OCI-LY7 (cell line): ENCODE measurements at regions of chr5 and their contacts with region 1.

Region 1: DNA sequence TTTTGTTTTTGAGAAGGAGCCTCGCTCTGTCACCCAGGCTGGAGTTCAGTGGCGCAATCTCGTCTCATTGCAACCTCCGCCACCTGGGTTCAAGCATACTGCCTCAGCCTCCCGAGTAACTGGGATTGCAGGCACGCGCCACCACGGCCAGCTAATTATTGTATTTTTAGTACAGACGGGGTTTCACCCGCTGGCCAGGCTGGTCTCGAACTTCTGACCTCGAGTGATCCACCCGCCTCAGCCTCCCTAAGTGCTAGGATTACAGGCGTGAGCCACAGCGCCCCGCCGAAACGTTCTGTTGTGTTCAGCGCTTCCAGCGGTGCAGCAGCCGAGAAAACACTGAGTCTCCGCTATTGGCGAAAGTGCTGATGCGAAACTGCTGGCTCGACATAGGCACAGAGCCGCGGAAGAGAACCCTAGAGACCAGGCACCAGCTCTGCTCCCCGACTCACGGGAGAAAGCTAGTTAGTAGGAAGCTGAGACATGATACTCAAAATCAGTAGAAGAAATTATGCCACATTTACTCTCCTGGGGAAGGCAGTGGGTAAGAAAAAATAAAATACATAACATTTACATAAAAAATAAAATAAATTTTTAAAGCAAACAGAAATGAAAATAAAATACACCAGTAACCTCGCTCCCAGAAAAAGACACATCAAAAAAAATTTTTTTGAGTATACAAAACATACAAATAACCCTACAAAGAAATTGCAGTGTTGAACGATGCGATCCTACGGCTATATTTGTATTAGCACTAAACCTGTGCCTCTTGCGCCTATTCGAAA is 31.6 kb downstream of the ANXA2R start:
- DNase-seq: peak; percentile 96
- H3K4me3 ChIP-seq: peak overlapping the region; percentile 70
- H3K27ac ChIP-seq: peak overlapping the region; percentile 86
- H3K4me1 ChIP-seq: peaks cover 32% of the 10 kb centered on the region
- CTCF ChIP-seq: peak; percentile 66

Region 2: GRCh38 chr5:43049236-43049635 is 40.7 kb after region 1 on chr5:
- CTCF ChIA-PET with region 1: no interaction called
- POLR2A ChIA-PET with region 1: no interaction called
- intact Hi-C with region 1: no loop called
- DNase-seq: no peak
- H3K4me3 ChIP-seq: no peak overlapping the region
- H3K27ac ChIP-seq: no peak overlapping the region
- H3K4me1 ChIP-seq: peaks cover 11% of the 10 kb centered on the region
- CTCF ChIP-seq: no peak

Region 3: DNA sequence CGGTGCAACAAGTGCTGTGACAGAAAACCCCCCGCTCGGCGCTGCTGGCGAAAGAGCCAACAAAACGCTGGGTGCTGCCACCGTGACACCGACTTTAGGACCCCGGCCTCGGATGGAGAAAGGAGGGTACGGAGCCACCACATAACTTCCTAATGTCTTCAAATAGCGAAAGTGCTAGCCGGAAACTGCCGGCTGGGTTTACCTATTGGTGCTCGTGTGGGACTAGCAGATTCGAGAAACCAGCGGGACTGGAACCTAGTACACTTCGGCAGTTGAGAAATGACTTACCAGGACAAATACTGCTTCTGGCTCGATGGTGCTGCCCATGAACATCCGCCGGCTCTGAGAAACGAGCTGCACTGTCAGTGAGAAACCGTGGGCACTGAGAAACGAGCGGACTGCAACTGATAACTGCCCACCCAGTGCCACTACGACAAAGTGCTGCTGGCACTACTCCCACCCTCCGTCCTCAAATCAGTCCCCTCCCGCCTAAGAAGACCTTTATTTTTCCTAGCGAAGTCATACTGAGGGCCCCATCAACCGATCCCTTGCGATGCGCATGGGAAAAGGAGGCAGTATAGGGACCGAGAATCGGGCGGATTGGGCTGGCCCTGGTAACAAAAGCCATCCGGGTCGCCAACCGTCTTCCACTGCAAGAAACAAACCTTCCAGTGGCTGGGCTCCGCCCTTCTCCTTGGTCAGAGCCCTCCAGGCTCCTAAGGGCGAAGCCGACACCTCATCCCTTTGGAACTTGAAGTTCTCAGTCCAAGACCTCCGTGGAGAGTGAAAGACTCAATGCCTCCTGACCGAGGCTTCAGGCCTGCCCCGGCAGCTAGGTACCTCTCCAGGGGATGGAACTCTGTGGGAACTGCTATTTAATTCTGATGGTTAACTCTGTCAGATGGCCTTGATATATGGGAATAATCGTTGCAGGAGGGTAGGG is 58.5 kb after region 1 on chr5:
- CTCF ChIA-PET with region 1: interaction called, 3 read pairs
- POLR2A ChIA-PET with region 1: interaction called, 7 read pairs
- intact Hi-C with region 1: loop called (anchors 1 kb)
- DNase-seq: peak; percentile 93
- H3K4me3 ChIP-seq: peak overlapping the region; percentile 85
- H3K27ac ChIP-seq: peak overlapping the region; percentile 92
- H3K4me1 ChIP-seq: peaks cover 29% of the 10 kb centered on the region
- CTCF ChIP-seq: no peak

Region 4: GRCh38 chr5:43320846-43321245 is 312.3 kb after region 1 on chr5:
- CTCF ChIA-PET with region 1: no interaction called
- POLR2A ChIA-PET with region 1: no interaction called
- intact Hi-C with region 1: no loop called
- DNase-seq: no peak
- H3K4me3 ChIP-seq: no peak overlapping the region
- H3K27ac ChIP-seq: no peak overlapping the region
- H3K4me1 ChIP-seq: no peaks in the 10 kb centered on the region
- CTCF ChIP-seq: no peak